PC-3 (cell line): ENCODE measurements at regions of chrX and their contacts with region 1.

Region 1: GRCh38 chrX:130393451-130394074 is 8.1 kb upstream of the GPR119 start:
- DNase-seq: peak; percentile 74
- ATAC-seq: peak; percentile 84
- H3K4me3 ChIP-seq: no peak overlapping the region
- H3K27ac ChIP-seq: no peak overlapping the region
- H3K4me1 ChIP-seq: no peaks in the 10 kb centered on the region
- H3K27me3 ChIP-seq: no peaks in the 10 kb centered on the region
- CTCF ChIP-seq: peak; percentile 75

Region 2: GRCh38 chrX:130539721-130540321 is 146.3 kb after region 1 on chrX:
- CTCF ChIA-PET with region 1: no interaction called
- POLR2A ChIA-PET with region 1: no interaction called
- intact Hi-C with region 1: loop called (anchors 5 kb)
- DNase-seq: peak; percentile 63
- ATAC-seq: peak; percentile 55
- H3K4me3 ChIP-seq: no peak overlapping the region
- H3K27ac ChIP-seq: no peak overlapping the region
- H3K4me1 ChIP-seq: no peaks in the 10 kb centered on the region
- H3K27me3 ChIP-seq: no peaks in the 10 kb centered on the region
- CTCF ChIP-seq: peak; percentile 78

Region 3: DNA sequence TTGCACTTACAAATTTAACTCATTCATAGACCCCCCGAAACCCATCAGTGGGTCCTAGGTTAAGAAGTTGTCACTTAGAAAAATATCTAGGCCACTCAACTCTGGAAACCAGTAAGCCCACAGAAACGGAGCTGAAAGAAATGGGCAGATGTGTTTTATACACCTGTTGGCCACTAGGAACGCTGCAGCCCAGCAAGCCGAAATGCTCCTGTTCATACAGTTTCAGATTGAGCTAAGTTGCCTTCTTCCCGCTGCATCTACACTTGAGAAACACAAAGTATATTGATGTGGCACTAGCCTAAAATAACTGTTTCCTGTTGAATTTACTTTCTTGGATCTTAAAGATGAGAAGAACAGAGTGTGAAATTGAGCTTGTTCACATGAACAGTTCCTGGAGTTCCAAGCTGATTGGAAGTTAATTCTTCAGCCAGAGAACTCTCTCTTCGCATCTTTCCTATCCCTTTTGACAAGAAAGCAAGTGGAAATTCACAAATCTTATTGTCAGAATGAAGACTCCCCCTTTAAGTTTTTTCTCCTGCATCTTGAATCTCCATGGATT is 182.3 kb after region 1 on chrX:
- CTCF ChIA-PET with region 1: no interaction called
- POLR2A ChIA-PET with region 1: no interaction called
- intact Hi-C with region 1: loop called (anchors 5 kb)
- DNase-seq: peak; percentile 56
- ATAC-seq: peak; percentile 66
- H3K4me3 ChIP-seq: no peak overlapping the region
- H3K27ac ChIP-seq: no peak overlapping the region
- H3K4me1 ChIP-seq: peaks cover 12% of the 10 kb centered on the region
- H3K27me3 ChIP-seq: no peaks in the 10 kb centered on the region
- CTCF ChIP-seq: peak; percentile 82

Region 4: GRCh38 chrX:130726661-130727060 is 333.1 kb after region 1 on chrX:
- CTCF ChIA-PET with region 1: no interaction called
- POLR2A ChIA-PET with region 1: no interaction called
- intact Hi-C with region 1: loop called (anchors 10 kb)
- DNase-seq: peak; percentile 39
- ATAC-seq: peak; percentile 17; the same call in 1 of the 2 replicates
- H3K4me3 ChIP-seq: no peak overlapping the region
- H3K27ac ChIP-seq: peak overlapping the region; percentile 15
- H3K4me1 ChIP-seq: peaks cover 19% of the 10 kb centered on the region; the same call in 1 of the 2 replicates
- H3K27me3 ChIP-seq: no peaks in the 10 kb centered on the region
- CTCF ChIP-seq: no peak

Region 5: DNA sequence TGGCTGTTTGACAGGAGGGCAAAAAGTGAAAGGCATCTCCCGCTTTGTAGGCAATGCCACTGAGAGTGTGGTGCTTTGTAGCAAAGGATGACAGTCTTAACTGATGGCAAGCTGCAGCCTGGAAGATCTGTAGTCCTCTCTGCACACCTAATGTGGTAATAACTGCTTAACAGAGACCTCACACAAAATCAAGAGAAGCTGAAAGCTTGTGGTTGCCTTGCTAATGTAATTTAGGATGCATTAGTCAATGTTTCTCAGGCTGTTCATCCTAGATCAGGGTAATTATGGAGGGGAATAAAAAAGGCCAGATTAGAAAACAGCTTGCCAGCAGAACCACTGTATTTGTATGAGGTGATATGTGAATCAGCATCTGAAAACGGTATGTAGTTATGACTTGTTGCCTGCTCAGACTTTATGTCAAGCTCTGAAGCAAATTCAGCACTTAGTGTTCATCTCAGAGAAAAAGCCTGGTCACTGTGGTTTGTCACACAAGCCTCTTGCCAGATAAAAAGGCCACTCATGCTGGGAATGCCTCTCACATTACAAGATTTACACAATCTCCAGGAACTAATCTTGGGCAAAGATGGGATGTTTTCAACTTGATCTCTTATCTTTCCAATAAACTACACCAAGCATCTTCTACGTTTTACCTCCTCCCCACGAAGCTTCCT is 378.7 kb after region 1 on chrX:
- CTCF ChIA-PET with region 1: no interaction called
- POLR2A ChIA-PET with region 1: no interaction called
- intact Hi-C with region 1: no loop called
- DNase-seq: peak; percentile 82
- ATAC-seq: peak; percentile 71
- H3K4me3 ChIP-seq: peak overlapping the region; percentile 23; the same call in 1 of the 2 replicates
- H3K27ac ChIP-seq: peak overlapping the region; percentile 98
- H3K4me1 ChIP-seq: peaks cover 40% of the 10 kb centered on the region
- H3K27me3 ChIP-seq: no peaks in the 10 kb centered on the region
- CTCF ChIP-seq: no peak